T-cell (primary cell): ENCODE measurements at regions of chr5 and their contacts with region 1.

Region 1: GRCh38 chr5:111278845-111279504 is 54.8 kb downstream of the CAMK4 start:
- DNase-seq: peak; percentile 61 to 91 (median 85)
- ATAC-seq: peak; percentile 93 to 98 (median 96)
- H3K4me3 ChIP-seq: no peak overlapping the region
- H3K4me3 Mint-ChIP-seq: peak overlapping the region in 2 of 3 donors; percentile 9 to 25
- H3K27ac ChIP-seq: no peak overlapping the region
- H3K27ac Mint-ChIP-seq: peak overlapping the region in 1 of 2 donors; percentile 71
- H3K4me1 ChIP-seq: peaks cover 9 to 38% of the 10 kb centered on the region in 2 experiments
- H3K4me1 Mint-ChIP-seq: peaks cover 79 to 80% (median 79%) of the 10 kb centered on the region in 3 donors
- H3K27me3 ChIP-seq: no peaks in the 10 kb centered on the region
- H3K27me3 Mint-ChIP-seq: no peaks in the 10 kb centered on the region

Region 2: GRCh38 chr5:111158105-111158744 is 120.8 kb before region 1 on chr5:
- CTCF ChIA-PET with region 1: interaction called, 74 to 133 read pairs
- POLR2A ChIA-PET with region 1: no interaction called
- DNase-seq: peak; percentile 25 to 92 (median 69)
- ATAC-seq: peak; percentile 69 to 77 (median 72)
- H3K4me3 ChIP-seq: no peak overlapping the region
- H3K4me3 Mint-ChIP-seq: no peak overlapping the region
- H3K27ac ChIP-seq: no peak overlapping the region
- H3K27ac Mint-ChIP-seq: no peak overlapping the region
- H3K4me1 ChIP-seq: no peaks in the 10 kb centered on the region
- H3K4me1 Mint-ChIP-seq: peaks cover 0 to 5% (median 4%) of the 10 kb centered on the region in 3 donors
- H3K27me3 ChIP-seq: no peaks in the 10 kb centered on the region
- H3K27me3 Mint-ChIP-seq: peaks cover 0 to 6% of the 10 kb centered on the region in 2 donors

Region 3: GRCh38 chr5:111223889-111224563 is 54.9 kb before region 1 on chr5 and contains the start of gene CAMK4:
- CTCF ChIA-PET with region 1: interaction called, 20 to 31 read pairs
- POLR2A ChIA-PET with region 1: interaction called, 3 to 5 read pairs
- DNase-seq: peak; percentile 68 to 93 (median 82)
- ATAC-seq: peak; percentile 85 to 90 (median 86)
- H3K4me3 ChIP-seq: peak within 1 kb of the TSS; percentile 77 to 94
- H3K4me3 Mint-ChIP-seq: peak within 1 kb of the TSS; percentile 97 to 98 (median 98)
- H3K27ac ChIP-seq: peak within 1 kb of the TSS; percentile 78
- H3K27ac Mint-ChIP-seq: peak within 1 kb of the TSS; percentile 97 to 98
- H3K4me1 ChIP-seq: peaks cover 18 to 33% of the 10 kb centered on the region in 2 experiments
- H3K4me1 Mint-ChIP-seq: peaks cover 28 to 47% (median 35%) of the 10 kb centered on the region in 3 donors
- H3K27me3 ChIP-seq: no peaks in the 10 kb centered on the region
- H3K27me3 Mint-ChIP-seq: no peaks in the 10 kb centered on the region
- total RNA-seq, gene CAMK4: 120 to 274 (median 243) TPM

Region 4: DNA sequence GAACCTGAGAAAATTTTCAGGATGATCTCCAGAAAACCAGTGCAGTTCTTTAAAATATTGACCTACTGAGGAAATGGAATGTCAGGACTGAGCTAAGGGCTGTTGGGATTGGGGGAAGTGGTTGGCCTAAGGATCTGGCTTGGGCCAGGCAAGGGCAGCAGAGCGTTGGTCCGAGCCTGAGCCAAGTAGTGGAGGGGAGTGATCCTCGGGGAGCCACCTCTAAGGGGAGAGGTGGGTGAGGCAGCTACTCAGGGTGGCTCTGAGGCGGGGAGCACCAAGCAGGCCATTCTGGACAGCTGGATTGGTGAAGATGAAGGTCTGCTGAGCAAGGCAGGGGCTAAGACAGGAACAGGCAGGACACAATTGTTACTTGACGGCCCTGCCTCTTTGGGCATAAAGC is 43.3 kb before region 1 on chr5:
- CTCF ChIA-PET with region 1: interaction called, 6 to 11 read pairs
- POLR2A ChIA-PET with region 1: no interaction called
- DNase-seq: no peak
- ATAC-seq: no peak
- H3K4me3 ChIP-seq: peak overlapping the region in 1 of 2 donors; percentile 15
- H3K4me3 Mint-ChIP-seq: peak overlapping the region; percentile 64 to 82 (median 72)
- H3K27ac ChIP-seq: peak overlapping the region; percentile 78
- H3K27ac Mint-ChIP-seq: peak overlapping the region; percentile 95 to 96
- H3K4me1 ChIP-seq: peaks cover 55 to 91% of the 10 kb centered on the region in 2 experiments
- H3K4me1 Mint-ChIP-seq: peaks cover 90 to 94% (median 92%) of the 10 kb centered on the region in 3 donors
- H3K27me3 ChIP-seq: no peaks in the 10 kb centered on the region
- H3K27me3 Mint-ChIP-seq: no peaks in the 10 kb centered on the region

Region 5: GRCh38 chr5:111246459-111246858 is 32.5 kb before region 1 on chr5:
- CTCF ChIA-PET with region 1: interaction called in 1 of 2 experiments, 11 read pairs
- POLR2A ChIA-PET with region 1: no interaction called
- DNase-seq: no peak
- ATAC-seq: no peak
- H3K4me3 ChIP-seq: no peak overlapping the region
- H3K4me3 Mint-ChIP-seq: peak overlapping the region; percentile 3 to 46 (median 21)
- H3K27ac ChIP-seq: no peak overlapping the region
- H3K27ac Mint-ChIP-seq: peak overlapping the region; percentile 53 to 64
- H3K4me1 ChIP-seq: peaks cover 21 to 75% of the 10 kb centered on the region in 2 experiments
- H3K4me1 Mint-ChIP-seq: peaks cover 81 to 85% (median 84%) of the 10 kb centered on the region in 3 donors
- H3K27me3 ChIP-seq: no peaks in the 10 kb centered on the region
- H3K27me3 Mint-ChIP-seq: no peaks in the 10 kb centered on the region

Region 6: GRCh38 chr5:111254613-111255012 is 24.4 kb before region 1 on chr5:
- CTCF ChIA-PET with region 1: interaction called, 3 to 17 read pairs
- POLR2A ChIA-PET with region 1: interaction called in 1 of 2 experiments, 3 read pairs
- DNase-seq: peak in 31 of 35 experiments; percentile 35 to 89 (median 61)
- ATAC-seq: peak; percentile 59 to 93 (median 60)
- H3K4me3 ChIP-seq: no peak overlapping the region
- H3K4me3 Mint-ChIP-seq: peak overlapping the region; percentile 30 to 67 (median 46)
- H3K27ac ChIP-seq: peak overlapping the region; percentile 69
- H3K27ac Mint-ChIP-seq: peak overlapping the region; percentile 86 to 88
- H3K4me1 ChIP-seq: peaks cover 27 to 64% of the 10 kb centered on the region in 2 experiments
- H3K4me1 Mint-ChIP-seq: peaks cover 76 to 88% (median 81%) of the 10 kb centered on the region in 3 donors
- H3K27me3 ChIP-seq: no peaks in the 10 kb centered on the region
- H3K27me3 Mint-ChIP-seq: no peaks in the 10 kb centered on the region

Region 7: GRCh38 chr5:111313017-111313724 is 34.2 kb after region 1 on chr5:
- CTCF ChIA-PET with region 1: no interaction called
- POLR2A ChIA-PET with region 1: no interaction called
- DNase-seq: no peak
- ATAC-seq: peak; percentile 41 to 63 (median 51)
- H3K4me3 ChIP-seq: no peak overlapping the region
- H3K4me3 Mint-ChIP-seq: peak overlapping the region in 1 of 3 donors; percentile 2
- H3K27ac ChIP-seq: no peak overlapping the region
- H3K27ac Mint-ChIP-seq: peak overlapping the region; percentile 25 to 29
- H3K4me1 ChIP-seq: peaks cover 8 to 20% of the 10 kb centered on the region in 2 experiments
- H3K4me1 Mint-ChIP-seq: peaks cover 78 to 92% (median 84%) of the 10 kb centered on the region in 3 donors
- H3K27me3 ChIP-seq: no peaks in the 10 kb centered on the region
- H3K27me3 Mint-ChIP-seq: no peaks in the 10 kb centered on the region